AG04449 (cell line): ENCODE measurements at regions of chr11 and their contacts with region 1.

Region 1: GRCh38 chr11:118928108-118928870 is 2.6 kb upstream of the BCL9L start:
- DNase-seq: no peak
- H3K4me3 ChIP-seq: peak overlapping the region; percentile 72
- CTCF ChIP-seq: peak; percentile 89

Region 2: DNA sequence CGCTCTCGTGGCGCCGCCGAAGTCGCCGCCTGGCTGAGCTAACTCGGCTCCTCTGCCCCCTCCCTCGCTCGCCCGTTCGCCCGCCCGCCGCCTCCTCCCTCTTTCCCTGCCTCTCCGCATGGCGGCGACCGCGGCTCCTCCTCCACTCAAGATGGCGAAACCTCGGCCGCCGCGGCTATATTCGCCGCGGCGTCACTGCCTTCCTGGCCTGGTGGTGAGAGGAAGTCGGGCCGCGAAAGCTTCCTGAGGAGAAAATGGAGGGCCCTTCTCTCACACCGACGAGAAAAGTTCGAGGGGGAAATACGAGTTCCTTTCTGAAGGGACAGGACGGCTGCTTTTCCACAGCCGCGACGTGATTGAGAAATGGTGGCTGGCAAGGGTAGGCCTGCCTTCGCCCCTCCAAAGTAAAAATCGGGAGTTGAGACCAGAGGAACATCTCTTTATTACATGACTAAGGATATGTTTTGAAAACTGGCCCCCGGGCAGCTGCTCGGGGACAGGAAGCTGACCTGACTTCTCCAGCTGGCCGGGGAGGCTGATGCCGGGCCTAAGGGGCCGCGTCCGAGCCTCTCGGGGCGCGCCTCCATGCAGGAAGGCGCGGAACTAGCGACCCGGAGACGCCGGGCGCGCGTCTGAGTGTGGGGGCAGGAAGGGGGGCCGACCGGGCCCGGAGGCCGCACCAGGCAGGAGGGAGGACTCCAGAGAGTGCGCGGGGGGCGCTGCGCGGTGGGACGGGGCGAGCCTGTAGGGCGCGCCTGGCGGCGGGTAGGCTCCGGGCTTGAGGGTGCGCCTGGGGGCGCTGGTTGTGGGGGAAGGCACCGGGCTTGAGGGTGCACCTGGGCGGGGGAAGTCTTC is 137.0 kb before region 1 on chr11 and contains the start of gene DDX6:
- CTCF ChIA-PET with region 1: interaction called, 108 read pairs
- POLR2A ChIA-PET with region 1: interaction called, 10 read pairs
- DNase-seq: no peak
- H3K4me3 ChIP-seq: peak within 1 kb of the TSS; percentile 82
- CTCF ChIP-seq: peak; percentile 67

Region 3: GRCh38 chr11:118895142-118896039 is 32.9 kb before region 1 on chr11:
- CTCF ChIA-PET with region 1: interaction called, 12 read pairs
- POLR2A ChIA-PET with region 1: interaction called, 10 read pairs
- DNase-seq: no peak
- H3K4me3 ChIP-seq: no peak overlapping the region
- CTCF ChIP-seq: no peak

Region 4: DNA sequence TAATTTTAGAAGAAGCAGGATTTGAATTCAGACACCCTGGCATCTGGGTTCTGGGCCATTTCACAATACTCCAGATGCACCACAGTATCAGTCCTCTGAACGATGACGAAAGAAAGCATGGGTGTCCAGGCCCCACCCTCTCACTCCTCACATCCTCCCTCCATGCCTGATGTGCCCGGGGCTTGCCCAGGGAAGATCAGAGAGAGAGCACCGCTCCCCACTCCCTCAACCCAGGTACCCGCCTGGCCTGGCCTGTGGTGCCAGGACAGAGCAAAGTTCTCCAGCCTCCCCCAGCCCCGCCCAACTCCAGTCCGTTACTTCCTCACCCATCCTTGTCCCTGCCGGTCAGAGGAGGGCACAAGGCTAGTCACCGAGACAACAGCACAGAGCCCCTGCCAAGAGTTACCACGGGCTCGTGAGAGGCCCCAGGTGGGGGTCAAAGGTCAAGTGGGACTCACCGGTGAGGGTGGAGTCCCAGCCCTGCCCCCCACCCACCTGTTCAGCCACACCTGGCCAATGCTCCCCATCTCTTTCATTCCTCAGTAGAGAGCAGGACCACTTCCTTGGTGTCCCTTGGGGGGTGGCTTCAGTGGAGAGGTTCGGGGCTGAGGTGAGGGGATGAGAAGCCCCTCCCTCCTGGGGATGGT is 10.7 kb before region 1 on chr11:
- CTCF ChIA-PET with region 1: no interaction called
- POLR2A ChIA-PET with region 1: interaction called, 12 read pairs
- DNase-seq: no peak
- H3K4me3 ChIP-seq: peak overlapping the region; percentile 50
- CTCF ChIP-seq: no peak

Region 5: GRCh38 chr11:118948000-118948399 is 19.7 kb after region 1 on chr11:
- CTCF ChIA-PET with region 1: interaction called, 43 read pairs
- POLR2A ChIA-PET with region 1: interaction called, 3 read pairs
- DNase-seq: no peak
- H3K4me3 ChIP-seq: no peak overlapping the region
- CTCF ChIP-seq: no peak

Region 6: GRCh38 chr11:118997627-118998387 is 69.5 kb after region 1 on chr11 and contains the start of gene CENATAC:
- CTCF ChIA-PET with region 1: interaction called, 11 read pairs
- POLR2A ChIA-PET with region 1: interaction called, 3 read pairs
- DNase-seq: no peak
- H3K4me3 ChIP-seq: peak within 1 kb of the TSS; percentile 67
- CTCF ChIP-seq: no peak